ENCODE measurements at regions of chr3 and their contacts with region 1.

Region 1: DNA sequence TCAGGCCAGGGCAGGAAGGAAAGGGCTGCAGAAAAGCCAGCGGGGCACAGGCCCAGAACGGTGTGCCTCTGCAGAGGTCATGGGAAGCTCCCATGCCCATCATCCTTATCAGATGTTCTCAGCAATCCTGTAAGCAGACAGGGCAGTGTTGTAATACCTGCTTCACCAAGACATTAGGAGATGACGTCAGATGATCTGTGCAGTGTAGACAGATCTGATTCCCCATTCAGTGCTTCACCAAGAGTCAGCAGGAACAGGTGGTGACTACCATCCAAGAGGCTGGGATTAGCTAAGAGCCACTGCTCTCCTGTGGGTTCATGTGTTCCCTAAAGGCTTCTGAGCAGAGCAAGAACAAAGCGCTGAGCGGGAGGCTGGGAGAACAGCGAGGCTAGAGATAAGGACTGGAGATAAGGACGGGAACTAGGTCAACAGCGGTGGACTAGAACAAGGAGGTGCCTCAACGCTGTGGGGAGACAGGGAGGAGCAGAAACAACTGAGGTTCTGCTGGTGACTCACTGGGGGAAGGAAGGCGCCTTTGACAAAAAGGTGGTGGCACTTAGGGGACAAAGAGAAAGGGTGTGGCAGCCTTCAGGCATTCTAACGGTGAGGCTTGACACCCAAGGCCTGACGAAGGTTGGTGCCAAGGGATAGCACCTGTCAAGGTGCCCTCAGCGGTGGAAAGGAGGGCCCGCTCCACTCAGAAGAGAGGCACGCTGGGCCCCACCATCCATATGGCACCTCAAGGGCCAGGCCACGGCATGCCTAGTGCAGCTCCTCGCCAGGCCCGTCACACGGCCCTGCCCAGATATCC is 28.4 kb downstream of the CCDC12 start:
- DNase-seq: peak; percentile 80
- ATAC-seq: peak; percentile 77
- H3K4me3 Mint-ChIP-seq: peak overlapping the region; percentile 46
- H3K27ac Mint-ChIP-seq: peak overlapping the region; percentile 90
- H3K4me1 Mint-ChIP-seq: peaks cover 77% of the 10 kb centered on the region
- H3K27me3 Mint-ChIP-seq: no peaks in the 10 kb centered on the region
- CTCF ChIP-seq: no peak

Region 2: GRCh38 chr3:46960081-46960701 is 12.0 kb after region 1 on chr3:
- CTCF ChIA-PET with region 1: interaction called, 8 read pairs
- POLR2A ChIA-PET with region 1: interaction called, 33 read pairs
- intact Hi-C with region 1: no loop called
- DNase-seq: peak; percentile 28
- ATAC-seq: no peak
- H3K4me3 Mint-ChIP-seq: peak overlapping the region; percentile 46
- H3K27ac Mint-ChIP-seq: peak overlapping the region; percentile 96
- H3K4me1 Mint-ChIP-seq: peaks cover 77% of the 10 kb centered on the region
- H3K27me3 Mint-ChIP-seq: no peaks in the 10 kb centered on the region
- CTCF ChIP-seq: no peak